Endothelial cell of umbilical vein (primary cell): ENCODE measurements at regions of chr6 and their contacts with region 1.

Region 1: DNA sequence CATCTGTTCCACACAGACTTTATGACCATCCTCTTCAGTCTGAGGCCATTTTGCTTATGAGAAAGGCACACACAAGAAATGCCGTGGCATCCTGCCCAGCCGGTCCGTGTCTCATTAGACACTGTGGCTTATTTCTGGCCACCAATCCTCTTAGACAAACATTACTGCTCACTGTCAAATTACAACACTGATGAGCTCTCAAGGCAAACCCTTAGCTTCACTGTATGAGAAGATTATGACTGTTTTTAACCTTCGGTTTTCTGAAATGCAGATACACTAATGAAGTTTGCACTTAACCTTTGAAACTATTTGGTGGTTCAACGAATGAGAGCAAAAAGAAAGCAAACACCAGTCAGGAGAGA is 50.5 kb upstream of the DST start:
- DNase-seq: no peak
- H3K4me3 ChIP-seq: no peak overlapping the region
- H3K27ac ChIP-seq: peak overlapping the region; percentile 44
- H3K4me1 ChIP-seq: peaks cover 52% of the 10 kb centered on the region
- H3K27me3 ChIP-seq: no peaks in the 10 kb centered on the region
- CTCF ChIP-seq: no peak
- POLR2A ChIP-seq: no peak

Region 2: DNA sequence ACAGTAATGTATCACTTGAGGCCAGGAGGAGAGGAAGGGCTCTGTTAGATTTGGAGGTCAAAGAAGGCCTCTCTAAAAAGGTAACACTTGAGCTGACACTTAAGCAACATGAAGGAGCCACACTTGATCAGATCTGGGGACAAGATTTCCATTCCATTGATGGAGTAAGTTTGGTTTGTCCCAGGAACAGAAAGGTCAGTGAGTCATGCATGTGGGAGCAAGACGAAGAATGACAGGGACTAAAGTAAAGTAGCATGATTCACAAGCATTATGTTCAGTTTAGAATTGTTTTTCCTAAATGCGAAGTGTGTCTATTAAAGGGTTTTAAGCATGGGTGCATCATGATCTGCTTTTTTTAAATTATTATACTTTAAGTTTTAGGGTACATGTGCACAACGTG is 493.3 kb before region 1 on chr6:
- CTCF ChIA-PET with region 1: no interaction called
- POLR2A ChIA-PET with region 1: no interaction called
- dilution Hi-C with region 1: no loop called
- intact Hi-C with region 1: no loop called
- DNase-seq: no peak
- H3K4me3 ChIP-seq: no peak overlapping the region
- H3K27ac ChIP-seq: no peak overlapping the region
- H3K4me1 ChIP-seq: no peaks in the 10 kb centered on the region
- H3K27me3 ChIP-seq: no peaks in the 10 kb centered on the region
- CTCF ChIP-seq: no peak
- POLR2A ChIP-seq: no peak

Region 3: GRCh38 chr6:56652994-56653393 is 40.2 kb before region 1 on chr6:
- CTCF ChIA-PET with region 1: interaction called, 24 read pairs
- POLR2A ChIA-PET with region 1: interaction called, 7 read pairs
- dilution Hi-C with region 1: no loop called
- intact Hi-C with region 1: loop called (anchors 5 kb)
- DNase-seq: peak; percentile 86
- H3K4me3 ChIP-seq: no peak overlapping the region
- H3K27ac ChIP-seq: peak overlapping the region; percentile 66
- H3K4me1 ChIP-seq: peaks cover 46% of the 10 kb centered on the region
- H3K27me3 ChIP-seq: no peaks in the 10 kb centered on the region
- CTCF ChIP-seq: no peak
- POLR2A ChIP-seq: no peak